Stomach (tissue), 19 donors: ENCODE measurements at regions of chr2 and their contacts with region 1.

Region 1: GRCh38 chr2:86216577-86217555 is 17.6 kb downstream of the MRPL35 start:
- DNase-seq: no peak
- H3K4me3 ChIP-seq: no peak overlapping the region
- H3K27ac ChIP-seq: no peak overlapping the region
- H3K4me1 ChIP-seq: peaks cover 28 to 57% (median 42%) of the 10 kb centered on the region in 4 donors
- H3K27me3 ChIP-seq: no peaks in the 10 kb centered on the region
- CTCF ChIP-seq: no peak
- EP300 ChIP-seq: no peak
- POLR2A ChIP-seq: no peak

Region 2: GRCh38 chr2:86368161-86368824 is 151.4 kb after region 1 on chr2:
- intact Hi-C with region 1: loop called (anchors 5 kb)
- DNase-seq: peak; percentile 31 to 75
- H3K4me3 ChIP-seq: no peak overlapping the region
- H3K27ac ChIP-seq: no peak overlapping the region
- H3K4me1 ChIP-seq: peaks cover 10 to 31% (median 15%) of the 10 kb centered on the region in 4 donors
- H3K27me3 ChIP-seq: no peaks in the 10 kb centered on the region
- CTCF ChIP-seq: peak in 5 of 7 experiments; percentile 46 to 62 (median 52)
- EP300 ChIP-seq: no peak
- POLR2A ChIP-seq: no peak